ENCODE measurements at regions of chr19 and their contacts with region 1.

Region 1: DNA sequence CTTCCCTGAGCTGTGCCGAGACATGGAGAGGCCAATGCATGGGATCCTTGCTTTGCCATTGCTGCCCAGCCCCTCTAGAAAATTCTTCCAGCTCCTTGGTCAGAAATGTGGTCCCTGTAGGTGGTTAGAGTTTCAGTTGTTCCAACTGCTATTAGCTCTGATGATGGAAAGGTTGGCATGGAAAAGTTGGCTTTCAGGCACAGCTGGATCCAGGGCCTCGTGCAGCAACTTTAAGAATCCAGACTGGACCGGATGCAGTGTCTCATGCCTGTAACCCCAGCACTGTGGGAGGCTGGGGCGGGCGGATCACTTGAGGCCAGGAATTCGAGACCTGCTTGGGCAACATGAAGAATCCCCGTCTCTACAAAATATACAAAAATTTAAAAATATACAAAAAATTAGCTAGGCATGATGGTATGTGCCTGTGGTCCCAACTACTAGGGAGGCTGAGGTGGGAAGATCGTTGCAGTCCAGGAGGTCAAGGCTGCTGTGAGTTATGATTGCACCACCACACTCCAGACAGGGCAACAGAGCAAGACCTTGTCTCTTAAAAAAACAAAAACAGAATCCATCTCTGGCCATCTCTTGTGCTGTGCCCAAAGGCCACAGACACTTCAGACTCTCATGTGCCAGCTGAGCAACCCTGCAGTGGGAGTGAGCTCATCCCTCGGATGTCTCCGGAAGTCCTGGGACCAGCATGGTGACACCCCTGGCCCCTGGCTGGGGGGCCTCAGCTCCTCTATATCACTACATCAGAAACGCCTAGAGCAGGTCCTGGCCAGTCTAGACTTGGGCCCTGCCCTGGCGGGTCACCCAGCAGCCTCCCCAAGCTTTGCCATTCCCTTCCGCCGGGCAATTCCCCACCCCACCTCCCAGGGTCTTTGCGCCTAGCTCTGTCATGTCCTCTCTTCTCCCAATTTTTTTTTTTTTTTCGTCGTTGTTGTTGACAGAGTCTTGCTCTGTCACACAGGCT is 16.8 kb downstream of the MEX3D start:
- DNase-seq: no peak
- H3K27ac ChIP-seq: no peak overlapping the region; the same call in 1 of the 2 replicates
- CTCF ChIP-seq: no peak

Region 2: DNA sequence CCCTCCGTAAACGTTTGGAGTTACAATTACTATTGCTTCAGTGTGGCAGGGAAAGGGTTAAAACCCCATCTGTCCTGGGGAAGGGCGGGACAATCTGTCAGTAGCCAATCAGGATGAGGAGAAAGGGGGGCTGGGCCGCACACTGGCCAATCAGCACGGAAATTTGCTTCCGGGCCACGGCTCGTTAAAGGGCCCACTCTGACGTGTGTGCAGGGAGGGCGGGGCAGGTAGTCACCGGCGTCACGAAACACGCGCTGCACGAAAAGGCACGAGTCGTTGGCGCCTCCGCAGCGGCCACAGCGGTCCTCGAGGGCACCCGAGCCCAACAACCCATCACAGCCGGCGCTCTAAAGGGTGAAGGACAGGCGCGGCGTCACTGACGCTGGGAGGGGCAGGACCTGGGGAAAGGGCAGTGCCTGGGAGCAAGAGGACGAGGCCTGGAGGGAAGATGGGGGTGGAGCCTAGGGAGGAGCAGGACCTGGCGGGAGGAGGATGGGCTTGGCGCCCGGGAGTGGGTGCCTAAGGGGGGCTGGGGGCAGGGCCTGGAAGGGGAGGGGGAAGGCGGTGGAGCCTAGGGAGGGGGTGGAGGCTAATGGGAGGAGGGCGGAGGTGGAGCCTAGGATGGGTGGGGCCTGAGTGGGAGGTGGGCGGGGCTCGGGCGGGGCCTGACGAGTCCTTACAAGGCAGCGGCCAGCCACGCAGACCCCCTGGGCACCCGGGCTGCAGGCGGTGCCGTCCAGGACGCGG is 43.4 kb before region 1 on chr19:
- CTCF ChIA-PET with region 1: no interaction called
- POLR2A ChIA-PET with region 1: no interaction called
- DNase-seq: peak; percentile 100
- H3K27ac ChIP-seq: peak overlapping the region; percentile 90
- CTCF ChIP-seq: no peak

Region 3: GRCh38 chr19:1661995-1662394 is 110.6 kb after region 1 on chr19:
- CTCF ChIA-PET with region 1: interaction called, 11 read pairs
- POLR2A ChIA-PET with region 1: no interaction called
- DNase-seq: no peak
- H3K27ac ChIP-seq: no peak overlapping the region
- CTCF ChIP-seq: no peak

Measured in RWPE1 (cell line).